Activated CD4-positive, alpha-beta memory T cell treated with anti-CD3 and anti-CD28 coated beads for 36 hours (primary cell): ENCODE measurements at regions of chr11 and their contacts with region 1.

Region 1: GRCh38 chr11:63567044-63567840 is 4.1 kb upstream of the PLAAT2 start:
- DNase-seq: peak; percentile 75
- H3K4me3 Mint-ChIP-seq: peak overlapping the region; percentile 52
- H3K27ac Mint-ChIP-seq: peak overlapping the region; percentile 86
- H3K4me1 Mint-ChIP-seq: peaks cover 53% of the 10 kb centered on the region
- H3K27me3 Mint-ChIP-seq: no peaks in the 10 kb centered on the region

Region 2: GRCh38 chr11:63227521-63228107 is 339.6 kb before region 1 on chr11:
- CTCF ChIA-PET with region 1: no interaction called
- POLR2A ChIA-PET with region 1: no interaction called
- intact Hi-C with region 1: no loop called
- DNase-seq: no peak
- H3K4me3 Mint-ChIP-seq: no peak overlapping the region
- H3K27ac Mint-ChIP-seq: no peak overlapping the region
- H3K4me1 Mint-ChIP-seq: no peaks in the 10 kb centered on the region
- H3K27me3 Mint-ChIP-seq: peaks cover 35% of the 10 kb centered on the region

Region 3: DNA sequence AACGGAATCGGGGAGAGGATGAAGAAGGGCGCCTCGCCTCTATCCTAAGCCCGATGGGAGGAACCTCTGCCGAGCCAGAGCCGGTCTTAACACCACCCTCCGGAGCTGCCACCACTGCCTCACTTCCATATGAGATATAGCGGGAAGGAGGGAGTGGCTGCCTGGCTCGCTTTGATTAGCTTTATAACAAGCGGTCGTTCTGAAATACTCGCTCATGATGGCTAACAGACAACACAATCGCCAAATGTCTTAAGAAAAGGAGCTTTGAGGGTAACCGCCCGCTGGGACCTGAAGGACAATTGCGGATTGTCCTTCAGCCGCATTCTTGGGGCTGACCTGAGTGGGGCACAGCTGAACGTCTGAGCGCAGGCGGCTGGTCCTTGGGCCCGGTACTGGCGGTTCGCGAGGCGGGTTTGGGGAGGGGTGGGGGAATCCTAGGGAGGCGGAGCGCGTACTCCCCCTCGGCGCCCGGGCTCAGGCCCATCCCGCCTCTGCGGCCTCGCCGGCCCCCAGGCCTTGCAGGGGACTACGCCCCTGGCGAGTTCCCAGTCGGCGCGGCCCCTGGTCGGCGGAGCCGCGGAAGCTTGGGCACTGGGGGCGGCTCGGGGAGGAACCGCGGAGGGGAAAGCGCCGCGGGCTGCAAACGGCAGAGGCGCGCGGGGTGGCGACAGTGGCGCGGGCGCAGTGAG is 76.5 kb before region 1 on chr11 and contains the start of gene PLAAT5:
- CTCF ChIA-PET with region 1: no interaction called
- POLR2A ChIA-PET with region 1: no interaction called
- intact Hi-C with region 1: loop called (anchors 2 kb)
- DNase-seq: peak; percentile 33
- H3K4me3 Mint-ChIP-seq: peak within 1 kb of the TSS; percentile 69
- H3K27ac Mint-ChIP-seq: peak within 1 kb of the TSS; percentile 40
- H3K4me1 Mint-ChIP-seq: peaks cover 17% of the 10 kb centered on the region
- H3K27me3 Mint-ChIP-seq: peaks cover 16% of the 10 kb centered on the region
- total RNA-seq, gene PLAAT5: 0.15 to 0.24 TPM

Region 4: GRCh38 chr11:63553741-63554151 is 13.5 kb before region 1 on chr11:
- CTCF ChIA-PET with region 1: no interaction called
- POLR2A ChIA-PET with region 1: interaction called, 20 read pairs
- intact Hi-C with region 1: loop called (anchors 1 kb)
- DNase-seq: peak; percentile 74
- H3K4me3 Mint-ChIP-seq: peak overlapping the region; percentile 69
- H3K27ac Mint-ChIP-seq: peak overlapping the region; percentile 95
- H3K4me1 Mint-ChIP-seq: peaks cover 34% of the 10 kb centered on the region
- H3K27me3 Mint-ChIP-seq: no peaks in the 10 kb centered on the region

Region 5: DNA sequence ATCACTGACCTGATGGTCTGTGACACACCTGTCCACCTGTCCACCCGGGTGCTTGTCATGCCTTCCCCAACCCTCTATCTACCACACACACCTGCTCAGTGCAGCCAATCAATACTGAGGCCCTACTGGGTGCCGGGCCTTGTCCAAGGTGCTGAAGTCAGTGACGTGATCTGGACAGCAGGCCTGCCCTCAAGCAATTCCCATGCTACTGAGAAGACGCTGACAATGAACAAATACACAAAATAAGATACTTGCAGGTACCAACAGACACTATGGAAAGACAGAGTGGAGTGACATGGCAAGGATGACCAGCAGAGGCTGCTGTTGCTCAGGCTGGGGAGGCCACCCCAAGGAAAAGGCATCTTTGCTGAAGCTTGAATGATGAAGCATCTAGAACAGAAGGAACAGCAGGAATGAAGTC is 25.7 kb after region 1 on chr11:
- CTCF ChIA-PET with region 1: no interaction called
- POLR2A ChIA-PET with region 1: no interaction called
- intact Hi-C with region 1: no loop called
- DNase-seq: peak; percentile 23
- H3K4me3 Mint-ChIP-seq: no peak overlapping the region
- H3K27ac Mint-ChIP-seq: no peak overlapping the region
- H3K4me1 Mint-ChIP-seq: no peaks in the 10 kb centered on the region
- H3K27me3 Mint-ChIP-seq: no peaks in the 10 kb centered on the region

Region 6: DNA sequence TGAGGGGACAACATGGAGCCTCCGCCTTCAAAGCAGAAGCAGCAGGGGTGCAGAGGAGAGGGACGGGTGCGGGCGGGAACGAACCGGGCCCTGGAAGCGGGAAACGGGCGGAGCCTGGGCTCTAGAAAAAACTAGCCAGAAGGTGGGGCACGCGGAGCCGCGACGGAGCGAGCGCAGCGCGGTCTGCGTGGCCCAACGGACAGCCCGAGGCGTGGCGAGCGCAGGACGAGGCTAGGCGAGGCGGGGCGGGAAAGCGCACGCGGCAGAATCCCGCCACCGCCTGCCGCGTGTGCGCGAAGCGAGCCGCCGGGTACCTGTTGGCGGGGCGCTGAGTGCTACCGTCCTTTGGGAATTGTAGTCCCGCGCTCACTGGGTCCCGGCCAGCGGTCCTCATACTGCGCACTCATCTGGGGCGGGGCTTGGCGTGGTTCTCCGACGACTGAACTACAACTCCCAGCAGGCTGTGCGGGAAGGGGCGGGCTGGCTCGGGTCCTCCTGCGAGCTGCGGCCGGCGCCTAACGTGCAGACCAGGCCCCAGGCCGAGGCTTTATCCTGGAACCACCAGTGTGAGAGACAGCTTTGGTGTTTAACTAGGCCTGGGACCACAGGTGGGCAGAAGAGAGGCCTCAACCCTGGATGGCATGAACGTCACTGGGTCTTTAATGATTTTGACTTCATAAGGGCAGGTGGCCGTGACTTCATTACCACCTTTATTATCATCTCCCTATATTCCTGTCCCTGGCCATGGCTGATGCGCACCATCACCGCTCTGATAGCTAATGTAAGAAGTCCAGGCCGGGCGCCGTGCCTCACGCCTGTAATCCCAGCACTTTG is 104.3 kb after region 1 on chr11 and contains the start of gene ATL3:
- CTCF ChIA-PET with region 1: no interaction called
- POLR2A ChIA-PET with region 1: no interaction called
- intact Hi-C with region 1: loop called (anchors 1 kb)
- DNase-seq: peak; percentile 97
- H3K4me3 Mint-ChIP-seq: peak within 1 kb of the TSS; percentile 85
- H3K27ac Mint-ChIP-seq: peak within 1 kb of the TSS; percentile 90
- H3K4me1 Mint-ChIP-seq: peaks cover 44% of the 10 kb centered on the region
- H3K27me3 Mint-ChIP-seq: no peaks in the 10 kb centered on the region
- total RNA-seq, gene ATL3: 31.3 to 34.6 TPM